ENCODE measurements at regions of chr3 and their contacts with region 1.

Region 1: GRCh38 chr3:112734718-112735350 is 93.9 kb upstream of the CCDC80 start:
- DNase-seq: peak; percentile 64
- ATAC-seq: peak; percentile 87
- H3K4me3 ChIP-seq: no peak overlapping the region
- H3K27ac ChIP-seq: no peak overlapping the region
- H3K4me1 ChIP-seq: no peaks in the 10 kb centered on the region
- H3K27me3 ChIP-seq: no peaks in the 10 kb centered on the region
- CTCF ChIP-seq: peak; percentile 78

Region 2: GRCh38 chr3:112794622-112795172 is 59.9 kb after region 1 on chr3:
- CTCF ChIA-PET with region 1: no interaction called
- POLR2A ChIA-PET with region 1: no interaction called
- in situ Hi-C with region 1: no loop called
- intact Hi-C with region 1: no loop called
- DNase-seq: no peak
- ATAC-seq: no peak
- H3K4me3 ChIP-seq: no peak overlapping the region
- H3K27ac ChIP-seq: no peak overlapping the region
- H3K4me1 ChIP-seq: no peaks in the 10 kb centered on the region
- H3K27me3 ChIP-seq: peaks cover 2% of the 10 kb centered on the region; the same call in 1 of the 2 replicates
- CTCF ChIP-seq: no peak

Region 3: DNA sequence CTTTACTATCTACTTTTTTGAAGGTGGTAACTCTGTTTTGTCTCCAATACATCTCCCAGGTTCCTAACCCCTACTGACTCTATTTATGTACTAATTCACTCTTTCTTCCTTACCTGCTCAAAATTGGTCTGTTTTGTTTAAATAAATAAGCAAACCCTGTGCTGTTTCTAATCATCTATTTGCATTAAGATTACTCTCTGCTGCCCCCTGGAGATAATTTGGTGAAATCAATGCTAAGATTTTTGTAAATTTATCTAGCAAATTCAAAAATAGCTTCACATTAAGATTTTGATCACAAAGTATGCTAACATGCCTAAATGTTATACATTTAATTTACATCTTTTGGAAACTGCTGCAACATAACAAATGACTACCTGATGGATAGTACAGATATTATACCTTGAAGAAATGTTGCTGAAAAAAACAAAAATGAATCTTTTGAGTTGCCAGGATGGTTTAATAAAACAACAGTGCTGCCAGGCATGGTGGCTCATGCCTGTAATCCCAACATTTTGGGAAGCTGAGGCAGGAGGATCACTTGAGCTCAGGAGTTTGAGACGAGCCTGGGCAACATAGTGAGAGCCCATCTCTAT is 244.5 kb after region 1 on chr3:
- CTCF ChIA-PET with region 1: interaction called, 8 read pairs
- POLR2A ChIA-PET with region 1: no interaction called
- in situ Hi-C with region 1: no loop called
- intact Hi-C with region 1: loop called (anchors 2 kb)
- DNase-seq: no peak
- ATAC-seq: no peak
- H3K4me3 ChIP-seq: no peak overlapping the region
- H3K27ac ChIP-seq: no peak overlapping the region
- H3K4me1 ChIP-seq: no peaks in the 10 kb centered on the region
- H3K27me3 ChIP-seq: peaks cover 15% of the 10 kb centered on the region; the same call in 1 of the 2 replicates
- CTCF ChIP-seq: peak; percentile 74